Ovary (tissue), 10 donors: ENCODE measurements at regions of chr11 and their contacts with region 1.

Region 1: GRCh38 chr11:129331871-129332274 is 43.8 kb upstream of the BARX2 start:
- DNase-seq: peak; percentile 63 to 80 (median 77)
- H3K4me3 ChIP-seq: no peak overlapping the region
- H3K27ac ChIP-seq: no peak overlapping the region
- H3K4me1 ChIP-seq: peaks cover 2% of the 10 kb centered on the region
- H3K27me3 ChIP-seq: no peaks in the 10 kb centered on the region
- CTCF ChIP-seq: peak; percentile 63 to 74 (median 63)
- EP300 ChIP-seq: no peak
- POLR2A ChIP-seq: no peak

Region 2: DNA sequence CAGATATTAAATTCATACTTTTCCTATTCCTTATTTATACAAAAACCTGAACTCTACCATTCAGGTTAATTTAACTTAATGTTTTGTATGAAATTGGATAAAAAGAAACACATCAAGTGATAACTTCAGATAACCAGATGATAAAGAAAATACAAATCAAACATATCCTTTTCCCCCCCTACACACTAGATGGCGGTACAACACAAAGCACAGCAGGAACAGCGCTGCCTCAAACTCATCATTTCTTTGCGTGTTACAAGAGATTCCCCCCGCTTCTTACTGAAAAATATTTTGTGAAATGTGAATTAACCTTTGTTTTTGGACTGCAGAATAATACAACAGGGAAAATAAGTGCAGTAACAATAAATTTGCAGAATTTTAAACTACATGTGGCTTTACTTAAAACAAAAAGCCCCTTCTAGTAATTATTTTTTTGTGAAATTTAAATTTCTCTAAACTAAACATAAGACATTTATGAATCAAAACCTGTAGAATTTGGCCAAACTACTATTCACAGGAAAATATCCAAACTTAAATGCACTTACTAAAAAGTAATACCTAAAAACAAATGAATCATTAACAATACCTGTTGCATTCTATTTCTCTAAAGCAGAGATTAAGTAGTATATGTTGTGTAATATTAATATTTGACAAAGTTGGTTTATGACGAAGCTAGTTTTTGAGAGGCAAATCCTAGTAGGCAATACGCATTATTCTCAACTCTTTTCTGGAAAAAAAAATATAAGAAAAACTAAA is 214.1 kb before region 1 on chr11:
- intact Hi-C with region 1: loop called (anchors 5 kb)
- DNase-seq: peak in 4 of 5 donors; percentile 11 to 50 (median 31)
- H3K4me3 ChIP-seq: no peak overlapping the region
- H3K27ac ChIP-seq: no peak overlapping the region
- H3K4me1 ChIP-seq: no peaks in the 10 kb centered on the region
- H3K27me3 ChIP-seq: no peaks in the 10 kb centered on the region
- CTCF ChIP-seq: peak; percentile 74 to 83 (median 80)
- EP300 ChIP-seq: no peak
- POLR2A ChIP-seq: no peak

Region 3: DNA sequence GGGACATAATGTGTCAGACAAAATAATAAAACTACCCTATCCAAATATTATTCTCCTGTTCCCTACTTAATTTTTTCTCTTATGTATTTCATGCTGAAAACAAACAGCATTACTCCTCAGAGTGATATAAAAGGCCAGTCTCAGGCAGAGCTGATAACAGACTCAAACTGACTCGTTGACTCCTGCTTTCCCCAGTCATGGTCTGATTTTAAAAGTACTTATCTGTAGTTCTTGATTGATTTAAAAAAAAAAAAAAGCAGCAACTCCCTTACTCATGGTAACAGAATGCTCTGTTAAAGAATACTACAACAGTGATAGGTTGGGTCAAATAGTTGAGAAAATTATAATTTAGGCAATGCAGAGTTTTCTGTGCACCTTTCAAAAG is 46.5 kb before region 1 on chr11:
- intact Hi-C with region 1: loop called in 1 of 4 experiments (anchors 1 kb)
- DNase-seq: no peak
- H3K4me3 ChIP-seq: no peak overlapping the region
- H3K27ac ChIP-seq: no peak overlapping the region
- H3K4me1 ChIP-seq: no peaks in the 10 kb centered on the region
- H3K27me3 ChIP-seq: no peaks in the 10 kb centered on the region
- CTCF ChIP-seq: no peak
- EP300 ChIP-seq: no peak
- POLR2A ChIP-seq: no peak

Region 4: GRCh38 chr11:129911298-129911697 is 579.4 kb after region 1 on chr11:
- intact Hi-C with region 1: no loop called
- DNase-seq: no peak
- H3K4me3 ChIP-seq: no peak overlapping the region
- H3K27ac ChIP-seq: no peak overlapping the region
- H3K4me1 ChIP-seq: no peaks in the 10 kb centered on the region
- H3K27me3 ChIP-seq: no peaks in the 10 kb centered on the region
- CTCF ChIP-seq: no peak
- EP300 ChIP-seq: no peak
- POLR2A ChIP-seq: no peak